ENCODE measurements at regions of chr4 and their contacts with region 1.

Region 1: DNA sequence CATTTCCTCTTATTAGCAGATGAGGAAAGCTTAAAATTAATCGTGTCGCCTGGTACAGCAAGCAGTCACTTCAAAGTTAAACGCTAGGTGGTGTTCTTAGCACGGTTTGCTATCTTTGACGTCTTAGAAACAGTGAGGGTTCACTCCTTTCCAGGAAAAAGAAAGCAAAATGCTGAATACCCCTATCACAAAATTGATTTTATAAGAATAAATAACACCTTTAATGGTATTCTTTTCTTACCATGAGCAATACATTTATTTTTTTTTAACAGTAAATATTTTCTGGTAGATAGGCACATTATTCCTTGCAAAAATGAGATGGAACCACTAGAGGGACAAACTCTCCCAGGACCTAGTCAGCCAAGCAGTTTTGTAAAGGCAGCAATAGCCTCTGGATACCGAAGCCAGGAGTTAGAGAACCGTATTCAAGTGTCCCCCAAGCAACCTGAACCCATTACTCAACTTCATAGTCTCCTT is 153.9 kb downstream of the KDR start:
- DNase-seq: peak in 1 of 2 donors; percentile 21
- H3K4me3 ChIP-seq: no peak overlapping the region
- CTCF ChIP-seq: no peak
- POLR2A ChIP-seq: no peak

Region 2: GRCh38 chr4:55321707-55322264 is 350.3 kb after region 1 on chr4:
- intact Hi-C with region 1: loop called (anchors 10 kb)
- DNase-seq: peak; percentile 78 to 88
- H3K4me3 ChIP-seq: no peak overlapping the region
- CTCF ChIP-seq: peak in 1 of 3 donors; percentile 36
- POLR2A ChIP-seq: no peak